Breast epithelium (tissue), 4 donors: ENCODE measurements at regions of chr9 and their contacts with region 1.

Region 1: DNA sequence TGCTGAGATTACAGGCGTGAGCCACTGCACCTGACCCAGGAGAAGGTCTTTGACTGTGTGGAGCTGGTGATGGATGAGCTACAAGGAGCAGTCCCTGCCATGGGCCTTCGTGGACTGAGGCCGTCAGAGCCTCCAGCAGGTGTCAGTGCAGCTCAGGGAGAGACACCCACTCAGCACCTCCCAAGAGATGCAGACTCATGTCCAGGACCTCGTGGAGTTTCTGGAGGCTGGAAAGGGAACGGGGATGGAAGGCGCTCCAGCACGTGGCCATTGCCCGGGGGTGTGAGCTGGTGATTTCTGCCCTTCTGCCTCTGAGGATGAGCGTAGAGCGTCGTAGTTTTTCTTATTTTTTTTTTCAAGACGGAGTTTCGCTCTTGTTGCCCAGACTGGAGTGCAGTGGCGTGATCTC is 9.5 kb downstream of the TOR4A start:
- DNase-seq: no peak
- H3K4me3 ChIP-seq: no peak overlapping the region
- H3K27ac ChIP-seq: no peak overlapping the region
- H3K4me1 ChIP-seq: no peaks in the 10 kb centered on the region
- H3K27me3 ChIP-seq: no peaks in the 10 kb centered on the region
- CTCF ChIP-seq: peak in 2 of 3 donors; percentile 56 to 58
- POLR2A ChIP-seq: no peak

Region 2: GRCh38 chr9:135971892-135972291 is 1315.1 kb before region 1 on chr9:
- intact Hi-C with region 1: no loop called
- DNase-seq: peak; percentile 56 to 79
- H3K4me3 ChIP-seq: no peak overlapping the region
- H3K27ac ChIP-seq: no peak overlapping the region
- H3K4me1 ChIP-seq: no peaks in the 10 kb centered on the region
- H3K27me3 ChIP-seq: peaks cover 0 to 23% of the 10 kb centered on the region in 2 donors
- CTCF ChIP-seq: no peak
- POLR2A ChIP-seq: no peak

Region 3: GRCh38 chr9:137435980-137436760 is 149.2 kb after region 1 on chr9:
- intact Hi-C with region 1: loop called (anchors 10 kb)
- DNase-seq: peak; percentile 90 to 93
- H3K4me3 ChIP-seq: peak overlapping the region in 1 of 3 donors; percentile 29
- H3K27ac ChIP-seq: peak overlapping the region; percentile 78 to 88
- H3K4me1 ChIP-seq: peaks cover 3 to 12% of the 10 kb centered on the region in 2 donors
- H3K27me3 ChIP-seq: no peaks in the 10 kb centered on the region
- CTCF ChIP-seq: no peak
- POLR2A ChIP-seq: no peak